PC-9 (cell line): ENCODE measurements at regions of chr11 and their contacts with region 1.

Region 1: DNA sequence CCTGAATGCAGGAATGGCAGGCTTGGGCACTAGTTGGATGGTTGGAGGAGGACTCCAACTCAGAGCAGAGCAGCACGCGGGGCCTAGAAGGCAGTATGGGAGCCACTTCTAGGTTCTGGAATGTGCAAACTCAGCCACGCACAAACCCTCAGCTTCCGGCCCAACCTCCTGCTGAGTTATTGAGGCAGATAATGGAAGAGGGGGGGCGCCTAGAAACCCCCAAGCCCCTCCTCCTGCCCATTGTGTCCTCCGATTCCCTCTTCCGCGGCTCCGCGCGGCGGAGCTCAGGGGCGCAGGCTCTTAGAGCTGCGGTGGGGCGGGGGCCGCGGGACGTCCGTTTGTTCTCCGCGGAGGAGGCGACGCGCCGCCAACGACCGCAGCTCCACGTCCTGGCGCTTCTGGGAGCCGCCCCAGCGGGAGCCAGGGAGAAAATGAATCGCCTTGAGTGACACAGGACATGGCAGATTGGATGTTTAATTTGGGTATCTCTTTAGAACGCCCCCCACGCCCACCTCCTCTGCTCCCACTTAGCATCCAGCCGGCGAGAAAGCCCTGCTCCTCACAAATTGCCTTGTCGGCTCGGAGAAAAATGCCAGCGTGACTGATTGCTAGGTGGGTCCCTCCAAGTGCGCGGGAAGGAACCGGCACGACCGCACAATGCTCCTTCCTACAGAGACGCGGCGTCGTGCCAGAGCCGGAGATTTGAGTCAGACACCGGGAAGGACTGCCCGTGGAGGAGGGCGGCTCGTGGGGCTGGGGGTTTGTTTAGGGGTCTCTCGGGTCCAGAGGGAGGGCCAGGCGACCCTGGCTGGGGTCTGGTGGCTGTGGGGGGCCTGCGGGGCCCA is 144.6 kb downstream of the NECTIN1 start:
- DNase-seq: peak; percentile 58 to 66
- H3K4me3 ChIP-seq: peak overlapping the region; percentile 70
- H3K27ac ChIP-seq: peak overlapping the region; percentile 50
- H3K4me1 ChIP-seq: peaks cover 30% of the 10 kb centered on the region
- H3K27me3 ChIP-seq: no peaks in the 10 kb centered on the region
- CTCF ChIP-seq: no peak

Region 2: GRCh38 chr11:119599864-119600541 is 15.6 kb after region 1 on chr11:
- CTCF ChIA-PET with region 1: no interaction called
- POLR2A ChIA-PET with region 1: interaction called, 10 read pairs
- intact Hi-C with region 1: no loop called
- DNase-seq: no peak
- H3K4me3 ChIP-seq: no peak overlapping the region
- H3K27ac ChIP-seq: no peak overlapping the region
- H3K4me1 ChIP-seq: peaks cover 22% of the 10 kb centered on the region
- H3K27me3 ChIP-seq: no peaks in the 10 kb centered on the region
- CTCF ChIP-seq: no peak